ENCODE measurements at regions of chr2 and their contacts with region 1.

Region 1: GRCh38 chr2:133674433-133675331 is 106.4 kb upstream of the NCKAP5 start:
- DNase-seq: peak; percentile 63 to 79 (median 72)
- ATAC-seq: peak; percentile 80 to 91 (median 86)
- H3K4me3 ChIP-seq: peak overlapping the region; percentile 16 to 46 (median 38)
- H3K27ac ChIP-seq: peak overlapping the region; percentile 61 to 91 (median 78)
- H3K4me1 ChIP-seq: peaks cover 0 to 23% (median 10%) of the 10 kb centered on the region in 4 donors
- H3K27me3 ChIP-seq: no peaks in the 10 kb centered on the region
- CTCF ChIP-seq: no peak
- POLR2A ChIP-seq: peak; percentile 79

Region 2: GRCh38 chr2:132953771-132954170 is 720.9 kb before region 1 on chr2:
- intact Hi-C with region 1: no loop called
- DNase-seq: no peak
- ATAC-seq: peak in 2 of 4 donors; percentile 22 to 57
- H3K4me3 ChIP-seq: no peak overlapping the region
- H3K27ac ChIP-seq: no peak overlapping the region
- H3K4me1 ChIP-seq: no peaks in the 10 kb centered on the region
- H3K27me3 ChIP-seq: no peaks in the 10 kb centered on the region
- CTCF ChIP-seq: no peak
- POLR2A ChIP-seq: no peak

Region 3: GRCh38 chr2:133765658-133766057 is 91.0 kb after region 1 on chr2:
- intact Hi-C with region 1: loop called in 1 of 2 experiments (anchors 10 kb)
- DNase-seq: peak in 2 of 3 donors; percentile 63 to 82
- ATAC-seq: peak; percentile 89 to 98 (median 95)
- H3K4me3 ChIP-seq: no peak overlapping the region
- H3K27ac ChIP-seq: peak overlapping the region; percentile 20 to 75 (median 62)
- H3K4me1 ChIP-seq: peaks cover 0 to 37% (median 12%) of the 10 kb centered on the region in 4 donors
- H3K27me3 ChIP-seq: no peaks in the 10 kb centered on the region
- CTCF ChIP-seq: no peak
- POLR2A ChIP-seq: peak; percentile 13

Measured in right lobe of liver (tissue), 6 donors.